Naive thymus-derived CD4-positive, alpha-beta T cell (primary cell): ENCODE measurements at regions of chr9 and their contacts with region 1.

Region 1: DNA sequence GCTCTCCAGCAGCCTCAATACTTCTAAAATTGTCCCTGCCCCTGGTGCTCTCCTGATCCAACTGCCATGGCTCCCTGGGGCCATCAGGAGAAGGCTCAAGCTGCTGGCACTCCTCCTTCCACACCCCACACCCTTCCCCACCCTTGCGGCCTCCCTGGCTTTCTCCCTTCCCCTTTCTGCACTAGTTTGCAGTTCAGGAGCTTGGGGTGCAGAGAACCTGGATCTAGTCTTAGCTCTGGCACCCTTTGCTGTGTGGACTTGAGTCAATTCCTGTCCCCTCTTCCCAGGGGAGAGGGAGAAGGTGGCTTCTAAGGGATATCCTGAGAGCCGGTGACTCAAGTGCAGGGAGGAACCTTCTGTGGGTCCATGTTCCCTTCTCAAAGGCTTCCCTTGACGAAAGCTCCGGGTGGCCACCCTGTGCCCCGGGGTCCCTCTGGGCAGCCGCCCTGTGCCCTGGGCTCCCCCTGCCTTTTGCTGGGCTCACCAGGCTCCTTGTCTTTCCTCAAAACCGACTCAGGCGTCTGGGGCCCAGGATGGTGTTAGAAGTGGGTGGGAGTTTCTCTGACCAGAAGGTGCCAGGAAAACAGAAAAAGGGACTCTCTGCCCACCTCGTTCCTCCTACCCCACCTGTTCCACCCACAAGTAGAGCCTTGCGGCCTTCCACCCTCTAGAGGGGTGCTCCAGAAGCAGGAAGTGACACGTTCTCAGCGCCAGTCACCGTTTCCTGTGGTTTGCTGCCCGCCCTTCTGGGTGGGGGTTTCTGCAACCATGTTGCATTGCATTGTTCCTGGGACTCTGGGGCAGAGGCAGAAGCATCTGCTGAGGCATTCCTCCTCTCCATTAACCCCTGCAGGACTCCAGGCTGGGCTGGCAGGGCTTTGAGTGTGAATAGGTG is 15.0 kb downstream of the GLIPR2 start:
- DNase-seq: peak; percentile 63 to 91 (median 87)
- ATAC-seq: peak; percentile 94
- H3K4me3 ChIP-seq: peak overlapping the region; percentile 53
- H3K4me3 Mint-ChIP-seq: peak overlapping the region; percentile 74 to 91 (median 88)
- H3K27ac ChIP-seq: peak overlapping the region; percentile 88
- H3K27ac Mint-ChIP-seq: peak overlapping the region; percentile 97 to 99 (median 99)
- H3K4me1 ChIP-seq: peaks cover 63 to 68% of the 10 kb centered on the region in 2 donors
- H3K4me1 Mint-ChIP-seq: peaks cover 46 to 68% (median 61%) of the 10 kb centered on the region in 7 donors
- H3K27me3 ChIP-seq: no peaks in the 10 kb centered on the region
- H3K27me3 Mint-ChIP-seq: no peaks in the 10 kb centered on the region

Region 2: DNA sequence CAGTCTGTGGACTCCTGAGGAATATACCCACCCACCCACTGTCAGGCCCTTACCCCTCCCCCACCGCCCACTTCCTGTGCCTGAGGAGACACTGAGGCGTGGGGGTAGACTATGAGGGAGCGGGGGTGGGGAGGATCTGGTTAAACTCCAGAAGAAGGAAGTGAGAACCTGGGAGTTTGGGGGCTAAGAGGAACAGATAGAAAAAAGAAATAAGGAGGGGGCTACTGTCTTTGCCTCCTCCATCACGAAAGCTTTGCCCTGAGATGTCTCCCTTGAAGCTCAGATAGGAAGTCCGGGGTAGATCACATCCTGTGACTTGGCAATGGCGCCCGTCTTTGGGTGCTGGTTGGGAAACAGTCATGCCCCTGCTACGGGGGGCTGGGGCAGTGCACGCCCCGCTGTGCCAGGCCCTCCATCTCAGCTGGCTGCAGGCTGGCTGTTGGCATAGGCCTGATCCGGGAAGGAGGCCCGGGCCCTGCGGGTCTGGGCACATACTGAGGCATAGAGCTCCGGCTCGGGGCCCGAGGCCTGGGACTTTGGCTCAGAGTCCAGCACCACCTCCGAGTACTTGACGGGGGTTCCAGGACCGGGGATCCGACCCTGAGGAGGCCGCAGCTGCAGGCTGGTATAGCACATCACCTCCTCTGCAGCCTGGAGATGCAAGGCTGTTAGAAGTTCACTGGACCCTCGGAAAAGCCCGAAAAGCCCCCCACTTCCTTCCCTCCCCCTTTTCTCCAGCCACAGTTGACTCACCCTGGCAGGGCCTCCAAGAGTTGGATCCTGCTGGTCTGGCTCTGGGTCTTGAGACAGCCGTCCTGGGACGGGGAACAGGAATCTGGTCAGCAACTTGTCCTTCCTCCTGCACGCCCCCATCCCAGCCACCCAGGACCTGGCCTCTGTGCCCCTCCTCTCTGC is 501.9 kb before region 1 on chr9:
- CTCF ChIA-PET with region 1: no interaction called
- POLR2A ChIA-PET with region 1: no interaction called
- intact Hi-C with region 1: no loop called
- DNase-seq: peak in 7 of 9 donors; percentile 45 to 60 (median 52)
- ATAC-seq: no peak
- H3K4me3 ChIP-seq: peak overlapping the region; percentile 86
- H3K4me3 Mint-ChIP-seq: peak overlapping the region; percentile 90 to 100 (median 96)
- H3K27ac ChIP-seq: peak overlapping the region; percentile 83
- H3K27ac Mint-ChIP-seq: peak overlapping the region; percentile 86 to 98 (median 95)
- H3K4me1 ChIP-seq: peaks cover 47 to 53% of the 10 kb centered on the region in 2 donors
- H3K4me1 Mint-ChIP-seq: peaks cover 36 to 73% (median 49%) of the 10 kb centered on the region in 7 donors
- H3K27me3 ChIP-seq: no peaks in the 10 kb centered on the region
- H3K27me3 Mint-ChIP-seq: no peaks in the 10 kb centered on the region

Region 3: GRCh38 chr9:36053971-36054370 is 97.6 kb before region 1 on chr9:
- CTCF ChIA-PET with region 1: no interaction called
- POLR2A ChIA-PET with region 1: no interaction called
- intact Hi-C with region 1: no loop called
- DNase-seq: no peak
- ATAC-seq: no peak
- H3K4me3 ChIP-seq: no peak overlapping the region
- H3K4me3 Mint-ChIP-seq: no peak overlapping the region
- H3K27ac ChIP-seq: no peak overlapping the region
- H3K27ac Mint-ChIP-seq: peak overlapping the region in 1 of 9 donors; percentile 42
- H3K4me1 ChIP-seq: no peaks in the 10 kb centered on the region
- H3K4me1 Mint-ChIP-seq: peaks cover 0 to 7% (median 0%) of the 10 kb centered on the region in 7 donors
- H3K27me3 ChIP-seq: no peaks in the 10 kb centered on the region
- H3K27me3 Mint-ChIP-seq: no peaks in the 10 kb centered on the region

Region 4: GRCh38 chr9:36136272-36136893 is 15.2 kb before region 1 on chr9 and contains the start of gene GLIPR2:
- CTCF ChIA-PET with region 1: interaction called, 6 read pairs
- POLR2A ChIA-PET with region 1: interaction called, 14 read pairs
- intact Hi-C with region 1: loop called (anchors 1 kb)
- DNase-seq: peak; percentile 60 to 88 (median 69)
- ATAC-seq: peak; percentile 97
- H3K4me3 ChIP-seq: peak within 1 kb of the TSS; percentile 78
- H3K4me3 Mint-ChIP-seq: peak within 1 kb of the TSS; percentile 83 to 99 (median 93)
- H3K27ac ChIP-seq: peak within 1 kb of the TSS; percentile 74
- H3K27ac Mint-ChIP-seq: peak within 1 kb of the TSS; percentile 25 to 94 (median 87)
- H3K4me1 ChIP-seq: peaks cover 43 to 49% of the 10 kb centered on the region in 2 donors
- H3K4me1 Mint-ChIP-seq: peaks cover 43 to 52% (median 49%) of the 10 kb centered on the region in 7 donors
- H3K27me3 ChIP-seq: no peaks in the 10 kb centered on the region
- H3K27me3 Mint-ChIP-seq: peaks cover 0 to 39% (median 0%) of the 10 kb centered on the region in 5 donors
- total RNA-seq, gene GLIPR2: 7.7 to 74.7 (median 18.6) TPM

Region 5: GRCh38 chr9:36177571-36177970 is 26.0 kb after region 1 on chr9:
- CTCF ChIA-PET with region 1: no interaction called
- POLR2A ChIA-PET with region 1: no interaction called
- intact Hi-C with region 1: no loop called
- DNase-seq: no peak
- ATAC-seq: no peak
- H3K4me3 ChIP-seq: no peak overlapping the region
- H3K4me3 Mint-ChIP-seq: no peak overlapping the region
- H3K27ac ChIP-seq: no peak overlapping the region
- H3K27ac Mint-ChIP-seq: peak overlapping the region in 1 of 9 donors; percentile 39
- H3K4me1 ChIP-seq: no peaks in the 10 kb centered on the region
- H3K4me1 Mint-ChIP-seq: peaks cover 0 to 10% (median 0%) of the 10 kb centered on the region in 7 donors
- H3K27me3 ChIP-seq: no peaks in the 10 kb centered on the region
- H3K27me3 Mint-ChIP-seq: peaks cover 0 to 19% (median 0%) of the 10 kb centered on the region in 5 donors